HepG2 (cell line): ENCODE measurements at regions of chr9 and their contacts with region 1.

Region 1: DNA sequence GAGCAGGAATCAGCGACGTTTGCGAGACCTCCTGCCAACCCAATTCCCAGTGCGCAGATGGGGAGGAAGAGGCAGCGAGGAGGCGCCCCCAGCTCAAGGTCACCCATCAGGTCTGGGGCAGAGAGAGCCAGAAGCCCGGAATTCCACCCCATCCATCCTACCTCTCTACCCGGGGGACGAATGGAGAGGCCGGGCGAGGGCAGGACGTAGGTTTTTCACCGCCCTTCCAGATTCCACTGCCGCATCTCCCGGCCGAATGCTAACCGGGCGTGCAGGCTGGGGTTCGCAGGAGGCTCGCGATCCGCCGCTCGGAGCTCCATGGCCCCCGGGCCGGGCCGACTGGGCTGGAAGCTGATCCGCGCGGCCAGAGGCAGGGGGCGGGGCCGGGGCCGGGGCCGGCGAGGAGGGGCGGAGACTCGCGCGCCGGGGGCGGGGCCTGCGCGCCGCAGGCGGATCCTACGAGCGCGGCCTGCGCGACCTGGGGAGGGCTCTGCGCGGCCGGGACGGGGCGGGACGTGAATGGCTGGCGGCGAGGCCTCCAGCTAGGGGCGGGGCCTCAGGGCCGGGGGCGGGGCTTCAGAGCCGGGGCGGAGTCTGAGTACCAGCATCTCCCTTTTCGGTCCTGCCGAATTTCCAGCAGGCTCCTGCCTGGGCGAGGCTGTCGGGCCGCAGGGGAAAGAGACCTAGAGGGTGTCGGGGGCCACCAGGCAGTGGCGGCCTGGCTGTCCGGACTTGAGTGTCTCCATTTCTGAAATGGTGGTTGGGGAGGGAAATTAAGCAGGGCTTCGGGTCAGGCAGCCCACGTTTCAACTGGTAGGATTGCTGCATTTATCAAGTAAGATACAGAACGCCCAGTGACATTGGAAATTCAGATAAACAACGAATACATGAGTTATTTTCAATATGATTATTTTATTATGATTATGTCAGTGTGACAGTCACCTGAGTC is at the start of gene ST6GALNAC4:
- DNase-seq: peak; percentile 70
- ATAC-seq: peak; percentile 70
- H3K4me3 ChIP-seq: peak within 1 kb of the TSS; percentile 71 to 91 (median 73)
- H3K27ac ChIP-seq: peak within 1 kb of the TSS; percentile 40
- H3K4me1 ChIP-seq: peaks cover 78% of the 10 kb centered on the region
- H3K27me3 ChIP-seq: no peaks in the 10 kb centered on the region
- CTCF ChIP-seq: no peak
- EP300 ChIP-seq: no peak
- POLR2A ChIP-seq: no peak
- RAD21 ChIP-seq: no peak
- total RNA-seq, gene ST6GALNAC4: 14.8 and 18.8 TPM in 2 replicates

Region 2: DNA sequence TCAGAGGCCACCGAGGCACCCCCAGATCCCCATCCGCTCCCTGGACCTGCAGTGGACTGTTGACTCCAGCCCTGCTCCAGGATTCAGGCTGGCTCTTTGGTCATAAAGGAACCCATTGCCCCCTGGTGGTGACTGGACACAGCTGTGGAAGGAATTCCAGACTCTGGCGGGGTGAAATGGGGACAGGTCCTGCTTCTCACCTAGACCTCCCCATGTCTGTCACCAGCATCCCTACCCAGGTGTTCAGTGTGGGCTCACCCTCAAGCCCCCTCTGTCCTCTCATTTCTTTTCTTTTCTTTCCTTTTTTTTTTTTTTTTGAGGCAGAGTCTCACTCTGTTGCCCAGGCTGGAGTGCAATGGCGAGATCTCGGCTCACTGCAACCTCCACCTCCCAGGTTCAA is 330.4 kb before region 1 on chr9:
- CTCF ChIA-PET with region 1: interaction called, 10 read pairs
- POLR2A ChIA-PET with region 1: no interaction called
- in situ Hi-C with region 1: no loop called
- intact Hi-C with region 1: loop called (anchors 1 kb)
- DNase-seq: peak; percentile 75
- ATAC-seq: peak; percentile 94
- H3K4me3 ChIP-seq: no peak overlapping the region
- H3K27ac ChIP-seq: no peak overlapping the region
- H3K4me1 ChIP-seq: peaks cover 25% of the 10 kb centered on the region
- H3K27me3 ChIP-seq: no peaks in the 10 kb centered on the region
- CTCF ChIP-seq: peak; percentile 96
- EP300 ChIP-seq: no peak
- POLR2A ChIP-seq: no peak
- RAD21 ChIP-seq: peak; percentile 90

Region 3: GRCh38 chr9:127802576-127803443 is 114.1 kb before region 1 on chr9 and contains the start of gene FPGS:
- CTCF ChIA-PET with region 1: no interaction called
- POLR2A ChIA-PET with region 1: interaction called, 4 read pairs
- in situ Hi-C with region 1: no loop called
- intact Hi-C with region 1: loop called (anchors 5 kb)
- DNase-seq: peak; percentile 75
- ATAC-seq: peak; percentile 86
- H3K4me3 ChIP-seq: peak within 1 kb of the TSS; percentile 78 to 93 (median 84)
- H3K27ac ChIP-seq: peak within 1 kb of the TSS; percentile 86
- H3K4me1 ChIP-seq: peaks cover 45% of the 10 kb centered on the region
- H3K27me3 ChIP-seq: no peaks in the 10 kb centered on the region; a peak in 1 of 5 replicates
- CTCF ChIP-seq: no peak; the same call in 1 of the 2 replicates
- EP300 ChIP-seq: no peak
- POLR2A ChIP-seq: peak; percentile 67 to 72
- RAD21 ChIP-seq: peak; percentile 43; the same call in 1 of the 2 replicates
- total RNA-seq, gene FPGS: 20.3 and 35.6 TPM in 2 replicates

Region 4: DNA sequence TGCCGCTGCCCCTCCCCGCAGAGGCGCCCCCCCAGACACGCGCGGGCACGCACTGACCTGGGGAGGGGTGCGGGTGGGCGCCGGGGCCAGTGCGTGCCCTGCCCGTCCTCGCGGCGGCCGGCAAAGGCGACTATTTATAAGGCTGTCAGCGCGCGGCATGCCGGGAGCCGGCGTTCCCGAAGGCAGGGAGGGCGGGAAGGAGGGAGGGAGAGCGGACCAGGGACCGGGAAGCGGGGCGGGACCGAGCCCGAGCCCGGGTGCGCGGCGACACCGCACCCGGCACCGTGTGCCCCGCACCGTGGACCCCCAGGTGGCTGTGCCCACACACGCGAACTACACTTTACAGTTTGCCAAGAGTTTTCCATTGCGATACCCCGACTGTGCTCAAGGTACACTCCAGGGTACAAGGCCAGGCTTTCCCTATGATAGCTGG is 39.4 kb before region 1 on chr9 and contains the start of gene AK1:
- CTCF ChIA-PET with region 1: no interaction called
- POLR2A ChIA-PET with region 1: interaction called, 12 read pairs
- in situ Hi-C with region 1: loop called (anchors 5 kb)
- intact Hi-C with region 1: no loop called
- DNase-seq: no peak
- ATAC-seq: peak; percentile 81
- H3K4me3 ChIP-seq: peak within 1 kb of the TSS; percentile 67 to 82 (median 69)
- H3K27ac ChIP-seq: peak within 1 kb of the TSS; percentile 14
- H3K4me1 ChIP-seq: peaks cover 38% of the 10 kb centered on the region
- H3K27me3 ChIP-seq: no peaks in the 10 kb centered on the region
- CTCF ChIP-seq: no peak
- EP300 ChIP-seq: no peak
- POLR2A ChIP-seq: peak in 1 of 2 experiments; percentile 62; a peak in 2 of 4 replicates
- RAD21 ChIP-seq: no peak
- total RNA-seq, gene AK1: 25.7 and 32.8 TPM in 2 replicates